ENCODE measurements at regions of chr11 and their contacts with region 1.

Region 1: DNA sequence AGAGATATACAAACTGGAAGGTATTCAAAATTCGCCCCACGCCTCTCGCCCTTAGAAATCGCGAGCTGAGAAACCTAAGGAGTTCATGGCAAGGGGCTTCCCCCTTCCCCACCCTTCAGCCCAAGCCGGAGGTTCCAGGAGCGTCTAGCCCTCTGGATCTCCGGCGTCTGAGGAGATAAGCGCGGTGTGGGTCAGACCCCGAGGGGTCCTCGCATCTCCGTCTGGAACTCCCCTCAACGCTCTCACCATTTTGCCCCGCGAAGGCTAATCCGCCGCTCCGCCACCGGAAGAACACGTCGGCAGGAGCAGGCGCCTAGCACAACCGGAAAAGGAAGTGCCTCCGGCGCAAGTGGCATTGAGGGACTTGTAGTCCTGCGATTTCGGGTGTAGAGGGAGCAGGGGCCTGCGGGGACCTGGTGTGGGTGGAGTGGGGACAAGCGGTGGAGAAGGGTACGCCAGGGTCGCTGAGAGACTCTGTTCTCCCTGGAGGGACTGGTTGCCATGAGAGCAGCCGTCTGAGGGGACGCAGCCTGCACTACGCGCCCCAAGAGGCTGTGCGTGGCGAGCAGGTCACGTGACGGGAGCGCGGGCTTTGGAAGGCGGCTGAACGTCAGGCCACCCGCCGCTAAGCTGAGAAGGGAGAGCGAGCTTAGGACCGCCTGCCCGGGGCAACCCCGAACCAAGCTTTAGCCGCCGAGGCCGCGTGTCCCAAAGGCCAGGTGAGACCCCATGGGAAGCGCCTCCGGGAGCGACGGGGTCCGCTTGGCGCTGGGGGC is at the starts of genes FEN1 and TMEM258:
- DNase-seq: peak; percentile 74 to 94 (median 80)
- ATAC-seq: peak; percentile 88
- H3K4me3 ChIP-seq: peak within 1 kb of the TSS; percentile 87
- H3K4me3 Mint-ChIP-seq: peak within 1 kb of the TSS; percentile 94
- H3K27ac ChIP-seq: peak within 1 kb of the TSS; percentile 93 to 97
- H3K27ac Mint-ChIP-seq: peak within 1 kb of the TSS; percentile 95
- H3K4me1 ChIP-seq: peaks cover 34% of the 10 kb centered on the region
- H3K4me1 Mint-ChIP-seq: peaks cover 44% of the 10 kb centered on the region
- H3K27me3 ChIP-seq: no peaks in the 10 kb centered on the region
- H3K27me3 Mint-ChIP-seq: no peaks in the 10 kb centered on the region
- CTCF ChIP-seq: no peak
- total RNA-seq, gene FEN1: 7.5 to 9.1 TPM
- total RNA-seq, gene TMEM258: 55.2 to 56.0 TPM

Region 2: DNA sequence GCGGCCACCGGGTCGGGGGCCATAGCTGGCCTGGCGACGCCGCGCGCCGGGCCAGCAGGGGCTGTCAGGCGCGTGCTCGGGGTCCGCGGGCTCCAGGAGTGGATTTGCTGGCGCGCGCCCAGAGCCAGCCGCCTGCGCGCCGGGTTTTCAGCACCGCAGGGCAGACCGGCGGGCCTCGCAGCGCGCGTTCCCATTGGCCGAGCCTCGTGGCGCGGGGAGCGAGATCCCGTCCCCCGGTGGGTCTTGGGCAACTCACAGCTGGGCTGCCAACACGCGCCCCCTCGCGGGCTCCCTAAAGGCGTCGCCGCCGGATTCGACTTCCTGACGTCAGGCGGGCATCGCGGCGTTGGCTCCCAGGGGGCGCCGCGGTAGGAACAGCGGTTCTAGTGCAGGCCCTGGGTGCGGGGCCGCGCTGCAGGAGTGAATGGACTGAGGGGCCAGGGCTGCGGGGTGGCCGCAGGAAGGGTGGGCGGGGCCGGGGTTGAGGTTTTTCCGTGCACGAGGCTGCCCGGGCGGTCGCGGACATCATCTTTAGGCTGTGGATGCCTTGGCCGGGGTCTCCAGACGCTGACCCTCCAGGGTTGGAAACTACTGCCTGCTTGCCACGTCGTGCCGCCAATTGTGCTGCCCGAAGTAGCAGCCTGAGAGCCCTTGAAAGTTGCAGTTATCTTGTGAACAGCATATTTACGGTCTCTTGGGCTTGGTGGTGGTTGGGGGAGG is 24.4 kb after region 1 on chr11 and contains the start of gene FADS1:
- CTCF ChIA-PET with region 1: interaction called, 50 read pairs
- POLR2A ChIA-PET with region 1: interaction called, 12 read pairs
- intact Hi-C with region 1: no loop called
- DNase-seq: peak; percentile 38 to 87 (median 58)
- ATAC-seq: peak; percentile 64
- H3K4me3 ChIP-seq: peak within 1 kb of the TSS; percentile 71
- H3K4me3 Mint-ChIP-seq: peak within 1 kb of the TSS; percentile 89
- H3K27ac ChIP-seq: no peak within 1 kb of the TSS
- H3K27ac Mint-ChIP-seq: no peak within 1 kb of the TSS
- H3K4me1 ChIP-seq: peaks cover 26% of the 10 kb centered on the region
- H3K4me1 Mint-ChIP-seq: peaks cover 13% of the 10 kb centered on the region
- H3K27me3 ChIP-seq: peaks cover 19 to 31% of the 10 kb centered on the region in 2 experiments
- H3K27me3 Mint-ChIP-seq: peaks cover 59% of the 10 kb centered on the region
- CTCF ChIP-seq: peak; percentile 67
- total RNA-seq, gene FADS1: 0.56 to 0.77 TPM

Region 3: DNA sequence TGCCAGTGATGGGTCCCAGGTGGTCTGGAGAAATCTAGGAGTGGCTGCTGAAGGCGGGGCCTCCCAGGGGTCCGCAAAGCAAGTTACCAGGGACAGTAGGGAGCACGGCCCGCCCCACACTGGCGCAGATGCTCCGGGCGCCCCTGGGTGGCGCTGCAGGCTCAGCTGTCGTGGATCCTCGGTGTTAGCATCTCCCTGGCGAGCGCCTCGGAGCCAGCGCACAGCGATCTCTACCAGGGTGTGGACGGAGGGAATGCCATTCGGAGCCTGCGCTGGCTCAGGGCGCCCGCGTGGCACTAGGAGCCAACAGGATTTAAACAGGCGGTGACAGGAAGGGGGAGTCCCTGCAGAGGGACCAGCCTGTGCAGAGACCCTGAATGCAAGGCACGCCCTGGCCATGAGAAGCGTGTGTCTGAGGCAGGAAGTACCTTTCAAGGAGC is 78.7 kb after region 1 on chr11:
- CTCF ChIA-PET with region 1: interaction called, 14 read pairs
- POLR2A ChIA-PET with region 1: no interaction called
- intact Hi-C with region 1: no loop called
- DNase-seq: peak; percentile 38 to 79 (median 50)
- ATAC-seq: peak; percentile 97
- H3K4me3 ChIP-seq: no peak overlapping the region
- H3K4me3 Mint-ChIP-seq: peak overlapping the region; percentile 13
- H3K27ac ChIP-seq: no peak overlapping the region
- H3K27ac Mint-ChIP-seq: no peak overlapping the region
- H3K4me1 ChIP-seq: peaks cover 7% of the 10 kb centered on the region
- H3K4me1 Mint-ChIP-seq: peaks cover 5% of the 10 kb centered on the region
- H3K27me3 ChIP-seq: no peaks in the 10 kb centered on the region
- H3K27me3 Mint-ChIP-seq: peaks cover 7% of the 10 kb centered on the region
- CTCF ChIP-seq: peak; percentile 57

Region 4: DNA sequence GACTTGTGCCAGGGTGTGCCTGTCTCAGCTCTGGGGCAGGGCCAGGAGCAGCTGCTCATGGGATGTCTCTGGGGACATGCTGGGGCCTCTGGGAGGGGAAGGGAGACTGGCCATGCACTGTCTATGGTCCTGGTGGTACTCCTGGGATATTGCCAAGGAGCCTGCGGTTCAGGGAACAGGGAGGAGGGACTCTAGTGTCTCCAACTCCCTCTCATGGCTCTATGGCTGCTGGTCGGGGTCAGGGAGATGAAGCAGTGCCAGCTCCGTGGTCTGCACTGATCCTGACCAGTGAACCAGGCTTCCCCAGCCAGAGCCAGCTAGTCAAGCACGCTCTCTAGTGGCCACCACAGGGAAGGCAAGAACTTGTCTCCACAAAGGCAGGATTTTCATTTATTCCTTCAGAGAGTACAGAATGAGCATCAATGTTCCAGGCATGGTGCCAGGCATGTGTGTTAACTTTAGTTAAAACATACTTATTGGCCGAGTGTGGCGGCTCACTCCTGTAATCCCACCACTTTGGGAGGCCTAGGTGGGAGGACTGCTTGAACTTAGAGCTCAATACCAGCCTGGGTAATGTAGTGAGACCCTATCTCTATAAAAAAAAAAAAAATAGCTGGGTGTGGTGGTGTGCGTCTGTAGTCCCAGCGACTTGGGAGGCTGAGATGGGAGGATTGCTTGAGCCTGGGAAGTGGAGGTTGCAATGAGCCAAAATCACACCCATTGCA is 155.2 kb after region 1 on chr11:
- CTCF ChIA-PET with region 1: interaction called, 9 read pairs
- POLR2A ChIA-PET with region 1: interaction called, 3 read pairs
- intact Hi-C with region 1: loop called in 1 of 2 experiments (anchors 1 kb)
- DNase-seq: peak; percentile 42 to 81 (median 58)
- ATAC-seq: peak; percentile 87
- H3K4me3 ChIP-seq: no peak overlapping the region
- H3K4me3 Mint-ChIP-seq: no peak overlapping the region
- H3K27ac ChIP-seq: no peak overlapping the region
- H3K27ac Mint-ChIP-seq: no peak overlapping the region
- H3K4me1 ChIP-seq: peaks cover 8% of the 10 kb centered on the region
- H3K4me1 Mint-ChIP-seq: no peaks in the 10 kb centered on the region
- H3K27me3 ChIP-seq: peaks cover 0 to 3% of the 10 kb centered on the region in 2 experiments
- H3K27me3 Mint-ChIP-seq: peaks cover 16% of the 10 kb centered on the region
- CTCF ChIP-seq: peak; percentile 70

Region 5: GRCh38 chr11:62081378-62082291 is 289.1 kb after region 1 on chr11:
- CTCF ChIA-PET with region 1: interaction called, 32 read pairs
- POLR2A ChIA-PET with region 1: interaction called, 12 read pairs
- intact Hi-C with region 1: no loop called
- DNase-seq: peak; percentile 66 to 89 (median 80)
- ATAC-seq: peak; percentile 93
- H3K4me3 ChIP-seq: no peak overlapping the region
- H3K4me3 Mint-ChIP-seq: peak overlapping the region; percentile 2
- H3K27ac ChIP-seq: no peak overlapping the region
- H3K27ac Mint-ChIP-seq: no peak overlapping the region
- H3K4me1 ChIP-seq: peaks cover 9% of the 10 kb centered on the region
- H3K4me1 Mint-ChIP-seq: peaks cover 8% of the 10 kb centered on the region
- H3K27me3 ChIP-seq: no peaks in the 10 kb centered on the region
- H3K27me3 Mint-ChIP-seq: no peaks in the 10 kb centered on the region
- CTCF ChIP-seq: peak; percentile 96

Region 6: DNA sequence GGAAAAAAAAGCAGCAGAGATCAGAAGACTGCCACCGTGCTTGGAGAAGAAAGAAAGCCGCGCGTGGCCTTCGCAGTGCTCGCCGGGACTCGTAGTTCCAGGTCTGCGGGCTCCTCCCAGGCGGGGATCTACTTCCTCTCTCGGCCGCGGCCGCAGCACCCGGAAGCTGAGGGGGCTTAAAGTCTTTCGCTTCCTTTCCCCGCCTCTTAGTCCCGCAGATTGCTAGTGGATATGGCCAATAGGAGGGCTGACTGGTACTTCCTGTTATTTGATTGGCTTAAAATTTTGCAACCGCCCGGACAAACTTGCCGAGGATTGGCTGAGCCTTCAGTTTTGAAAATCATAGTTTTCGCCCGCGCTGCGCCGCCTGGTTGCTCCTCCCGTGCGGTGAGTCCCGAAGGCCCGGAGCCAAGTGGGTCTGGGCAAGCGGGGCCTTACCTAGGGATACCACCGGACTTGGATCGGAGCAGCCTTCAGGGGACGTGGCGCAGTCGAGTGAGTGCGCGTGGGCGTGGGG is 331.2 kb after region 1 on chr11 and contains the start of gene INCENP:
- CTCF ChIA-PET with region 1: interaction called, 6 read pairs
- POLR2A ChIA-PET with region 1: interaction called, 3 read pairs
- intact Hi-C with region 1: loop called (anchors 1 kb)
- DNase-seq: peak; percentile 87 to 98 (median 92)
- ATAC-seq: peak; percentile 99
- H3K4me3 ChIP-seq: peak within 1 kb of the TSS; percentile 87
- H3K4me3 Mint-ChIP-seq: peak within 1 kb of the TSS; percentile 97
- H3K27ac ChIP-seq: no peak within 1 kb of the TSS
- H3K27ac Mint-ChIP-seq: peak within 1 kb of the TSS; percentile 89
- H3K4me1 ChIP-seq: peaks cover 17% of the 10 kb centered on the region
- H3K4me1 Mint-ChIP-seq: peaks cover 30% of the 10 kb centered on the region
- H3K27me3 ChIP-seq: no peaks in the 10 kb centered on the region
- H3K27me3 Mint-ChIP-seq: no peaks in the 10 kb centered on the region
- CTCF ChIP-seq: no peak
- total RNA-seq, gene INCENP: 12.6 to 16.3 TPM

Region 7: DNA sequence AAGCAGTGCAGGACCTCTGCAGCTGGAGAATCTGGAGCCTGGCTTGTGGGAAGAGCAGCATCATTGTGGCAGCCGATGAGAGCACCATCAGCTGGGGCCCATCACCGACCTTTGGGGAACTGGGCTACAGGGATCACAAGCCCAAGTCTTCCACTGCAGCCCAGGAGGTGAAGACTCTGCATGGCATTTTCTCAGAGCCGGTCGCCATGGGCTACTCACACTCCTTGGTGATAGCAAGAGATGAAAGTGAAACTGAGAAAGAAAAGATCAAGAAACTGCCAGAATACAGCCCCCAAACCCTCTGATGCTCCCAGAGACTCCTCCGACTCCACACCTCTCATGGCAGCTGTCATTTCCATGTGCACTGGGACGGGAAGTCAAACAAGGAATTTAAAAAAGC is 580.4 kb after region 1 on chr11:
- CTCF ChIA-PET with region 1: no interaction called
- POLR2A ChIA-PET with region 1: interaction called, 3 read pairs
- intact Hi-C with region 1: loop called in 1 of 2 experiments (anchors 5 kb)
- DNase-seq: no peak
- ATAC-seq: no peak
- H3K4me3 ChIP-seq: no peak overlapping the region
- H3K4me3 Mint-ChIP-seq: no peak overlapping the region
- H3K27ac ChIP-seq: no peak overlapping the region
- H3K27ac Mint-ChIP-seq: no peak overlapping the region
- H3K4me1 ChIP-seq: peaks cover 21% of the 10 kb centered on the region
- H3K4me1 Mint-ChIP-seq: peaks cover 17% of the 10 kb centered on the region
- H3K27me3 ChIP-seq: no peaks in the 10 kb centered on the region
- H3K27me3 Mint-ChIP-seq: no peaks in the 10 kb centered on the region
- CTCF ChIP-seq: no peak

Measured in CD4-positive, alpha-beta T cell (primary cell).